ENCODE measurements at regions of chr18 and their contacts with region 1.

Region 1: DNA sequence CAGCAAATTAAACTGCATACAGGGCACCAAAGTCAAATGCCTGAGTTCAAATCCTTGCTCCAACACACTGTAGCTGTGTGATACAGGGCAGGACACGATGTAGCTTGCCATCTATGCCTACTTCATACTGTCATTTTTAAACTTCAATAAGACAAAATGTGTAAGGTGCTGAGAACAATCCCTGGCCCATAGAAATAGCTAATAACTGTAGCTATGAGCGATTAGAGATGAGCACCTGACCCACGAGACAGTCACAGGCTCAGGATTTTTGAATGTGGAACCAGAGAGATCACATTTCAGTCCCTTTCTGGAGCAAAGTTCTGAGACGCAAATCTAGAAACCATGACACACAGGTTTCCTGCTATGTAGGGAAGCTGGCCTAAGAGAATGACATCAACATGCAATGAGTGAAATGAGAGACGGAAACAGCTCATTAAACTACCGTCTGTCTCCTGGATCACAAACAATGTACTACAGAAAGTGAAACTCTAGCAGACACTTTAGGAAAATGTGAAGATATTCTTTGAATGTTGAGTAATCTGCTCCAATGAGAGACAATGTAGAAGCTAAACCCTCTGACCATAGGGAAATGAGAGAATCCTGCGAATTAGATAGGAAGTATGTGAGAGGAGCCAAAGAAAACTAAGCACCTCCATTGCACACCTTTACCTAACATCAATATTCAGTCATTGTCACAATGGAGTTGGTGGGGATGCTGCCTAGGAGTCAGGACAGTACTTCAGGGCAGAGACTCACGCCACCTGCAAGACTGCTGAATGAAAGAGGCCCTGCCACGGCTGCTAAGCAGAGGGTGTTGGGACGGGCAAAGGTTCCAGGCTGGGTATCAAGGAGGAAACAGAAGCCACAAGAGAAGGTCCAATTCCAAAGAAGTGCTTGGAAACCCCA is 25.5 kb downstream of the B4GALT6 start:
- DNase-seq: no peak
- H3K4me3 Mint-ChIP-seq: peak overlapping the region; percentile 24
- H3K27ac Mint-ChIP-seq: peak overlapping the region; percentile 72
- H3K4me1 Mint-ChIP-seq: peaks cover 21% of the 10 kb centered on the region
- H3K27me3 Mint-ChIP-seq: peaks cover 6% of the 10 kb centered on the region

Region 2: GRCh38 chr18:31610286-31611205 is 48.4 kb before region 1 on chr18:
- intact Hi-C with region 1: loop called (anchors 5 kb)
- DNase-seq: no peak
- H3K4me3 Mint-ChIP-seq: no peak overlapping the region
- H3K27ac Mint-ChIP-seq: no peak overlapping the region
- H3K4me1 Mint-ChIP-seq: peaks cover 3% of the 10 kb centered on the region
- H3K27me3 Mint-ChIP-seq: peaks cover 9% of the 10 kb centered on the region

Region 3: DNA sequence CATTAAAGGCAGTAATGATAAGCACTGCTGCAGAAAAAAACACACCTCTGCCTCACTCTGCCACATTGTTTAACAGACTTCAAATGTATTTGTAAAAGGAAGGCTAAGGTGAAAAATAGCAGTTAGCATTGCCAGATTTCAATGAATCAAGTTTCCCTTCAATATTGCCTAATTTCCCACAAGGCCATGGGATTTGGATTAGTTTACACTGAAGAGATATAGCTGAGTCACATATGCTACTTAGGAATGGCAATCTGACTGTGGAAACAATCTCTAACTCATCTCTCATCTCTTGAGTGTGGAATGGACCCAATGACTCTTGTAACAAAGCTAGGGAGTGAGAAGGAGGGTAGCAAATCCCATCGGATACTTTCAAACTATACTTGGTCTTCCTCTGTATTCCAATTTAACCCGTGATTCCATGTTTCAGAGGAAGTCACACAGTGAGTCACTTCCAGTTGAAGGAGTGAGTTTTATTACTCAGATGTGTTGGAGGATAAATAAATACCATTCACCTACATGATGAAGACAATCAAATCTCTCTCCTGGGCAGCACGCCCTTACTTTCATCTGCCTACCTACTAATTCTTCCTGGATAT is 20.3 kb after region 1 on chr18:
- intact Hi-C with region 1: loop called (anchors 1 kb)
- DNase-seq: no peak
- H3K4me3 Mint-ChIP-seq: no peak overlapping the region
- H3K27ac Mint-ChIP-seq: no peak overlapping the region
- H3K4me1 Mint-ChIP-seq: peaks cover 10% of the 10 kb centered on the region
- H3K27me3 Mint-ChIP-seq: peaks cover 63% of the 10 kb centered on the region

Region 4: GRCh38 chr18:31685097-31686082 is 26.5 kb after region 1 on chr18:
- intact Hi-C with region 1: loop called (anchors 2 kb)
- DNase-seq: peak; percentile 52
- H3K4me3 Mint-ChIP-seq: peak overlapping the region; percentile 82
- H3K27ac Mint-ChIP-seq: peak overlapping the region; percentile 66
- H3K4me1 Mint-ChIP-seq: peaks cover 23% of the 10 kb centered on the region
- H3K27me3 Mint-ChIP-seq: peaks cover 47% of the 10 kb centered on the region

Region 5: GRCh38 chr18:32092422-32093101 is 433.6 kb after region 1 on chr18:
- intact Hi-C with region 1: loop called (anchors 5 kb)
- DNase-seq: peak; percentile 98
- H3K4me3 Mint-ChIP-seq: peak overlapping the region; percentile 94
- H3K27ac Mint-ChIP-seq: peak overlapping the region; percentile 93
- H3K4me1 Mint-ChIP-seq: peaks cover 40% of the 10 kb centered on the region
- H3K27me3 Mint-ChIP-seq: no peaks in the 10 kb centered on the region

Region 6: GRCh38 chr18:32208023-32208422 is 549.1 kb after region 1 on chr18:
- intact Hi-C with region 1: no loop called
- DNase-seq: no peak
- H3K4me3 Mint-ChIP-seq: no peak overlapping the region
- H3K27ac Mint-ChIP-seq: no peak overlapping the region
- H3K4me1 Mint-ChIP-seq: no peaks in the 10 kb centered on the region
- H3K27me3 Mint-ChIP-seq: no peaks in the 10 kb centered on the region